Left ventricle myocardium superior (tissue), 1 donor: ENCODE measurements at regions of chr12 and their contacts with region 1.

Region 1: DNA sequence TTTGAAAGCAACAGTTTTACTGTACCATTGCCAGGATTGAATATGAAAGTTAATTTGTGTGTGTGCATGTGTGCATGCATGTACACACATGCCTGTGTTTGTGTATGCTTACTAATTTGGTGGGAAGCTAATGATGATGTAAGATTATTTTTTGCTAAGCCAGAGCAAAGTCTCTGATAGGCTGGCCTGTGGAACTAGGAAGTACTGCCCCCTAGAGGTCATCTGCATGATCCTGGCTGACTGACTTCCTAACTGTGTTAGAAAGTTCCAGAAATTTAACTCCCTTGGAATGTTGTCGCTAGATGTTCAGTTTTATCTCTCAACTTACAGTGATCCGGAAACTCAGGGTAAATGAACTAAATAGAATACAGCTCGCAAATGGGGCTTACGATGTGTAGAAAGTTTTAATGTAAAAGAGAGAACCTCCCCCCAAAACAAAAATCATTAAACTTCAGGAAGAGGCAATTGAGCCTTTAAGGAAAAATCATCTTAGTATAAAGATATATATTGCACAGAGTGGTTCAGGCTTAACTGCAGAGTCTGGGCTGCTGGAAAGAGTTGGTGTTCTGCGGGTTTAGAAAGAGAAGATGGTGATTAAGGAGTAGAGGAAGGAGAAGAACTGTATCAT is 34.3 kb upstream of the SLC38A1 start:
- DNase-seq: no peak
- ATAC-seq: peak; percentile 62

Region 2: GRCh38 chr12:46153268-46153872 is 149.8 kb before region 1 on chr12:
- intact Hi-C with region 1: loop called (anchors 10 kb)
- DNase-seq: no peak
- ATAC-seq: no peak

Region 3: GRCh38 chr12:46647034-46647433 is 343.9 kb after region 1 on chr12:
- intact Hi-C with region 1: no loop called
- DNase-seq: no peak
- ATAC-seq: no peak